HEK293 (cell line): ENCODE measurements at regions of chr6 and their contacts with region 1.

Region 1: GRCh38 chr6:106125925-106126435 is 39.8 kb downstream of the PRDM1 start:
- H3K4me3 ChIP-seq: no peak overlapping the region
- H3K27ac ChIP-seq: no peak overlapping the region
- H3K4me1 ChIP-seq: peaks cover 3% of the 10 kb centered on the region; the same call in 1 of the 2 replicates
- CTCF ChIP-seq: no peak

Region 2: DNA sequence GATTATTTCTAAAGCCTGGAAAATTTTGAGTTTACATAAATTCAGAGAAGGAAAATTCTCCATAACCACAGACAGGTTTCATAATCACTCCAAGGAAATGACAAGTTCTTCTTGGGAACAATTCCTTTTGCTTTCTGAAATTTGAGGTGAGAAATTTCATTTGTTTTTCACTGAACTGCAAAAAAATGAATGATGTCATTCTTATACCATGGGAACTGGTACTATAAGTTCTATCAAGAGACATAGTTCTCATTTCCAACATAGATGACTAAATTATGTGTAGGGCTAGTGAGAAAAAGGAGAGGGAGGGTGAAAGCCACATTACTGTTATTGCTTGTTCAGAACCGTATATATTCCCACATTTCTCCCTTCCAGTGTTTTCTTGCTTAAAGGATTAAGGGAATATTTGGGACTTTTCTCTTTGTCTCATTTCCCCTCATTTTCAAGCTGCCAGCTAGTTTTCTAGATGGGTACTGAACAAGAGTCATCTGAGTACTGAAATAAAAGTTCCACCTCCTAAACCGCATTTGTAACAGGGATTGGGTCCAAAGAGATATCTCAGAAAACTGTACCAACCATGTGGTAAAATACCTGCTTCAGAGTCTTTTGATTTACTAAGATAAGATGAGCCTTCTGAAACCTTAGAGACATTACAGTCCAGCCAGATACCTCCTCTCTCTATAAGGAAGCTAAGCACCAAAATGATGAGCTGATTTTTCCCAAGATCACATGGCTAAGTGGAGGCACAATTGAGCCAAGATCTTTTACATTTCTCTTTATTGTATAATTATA is 184.2 kb before region 1 on chr6:
- CTCF ChIA-PET with region 1: no interaction called
- POLR2A ChIA-PET with region 1: no interaction called
- H3K4me3 ChIP-seq: no peak overlapping the region
- H3K27ac ChIP-seq: no peak overlapping the region
- H3K4me1 ChIP-seq: peaks cover 5% of the 10 kb centered on the region; the same call in 1 of the 2 replicates
- CTCF ChIP-seq: no peak

Region 3: DNA sequence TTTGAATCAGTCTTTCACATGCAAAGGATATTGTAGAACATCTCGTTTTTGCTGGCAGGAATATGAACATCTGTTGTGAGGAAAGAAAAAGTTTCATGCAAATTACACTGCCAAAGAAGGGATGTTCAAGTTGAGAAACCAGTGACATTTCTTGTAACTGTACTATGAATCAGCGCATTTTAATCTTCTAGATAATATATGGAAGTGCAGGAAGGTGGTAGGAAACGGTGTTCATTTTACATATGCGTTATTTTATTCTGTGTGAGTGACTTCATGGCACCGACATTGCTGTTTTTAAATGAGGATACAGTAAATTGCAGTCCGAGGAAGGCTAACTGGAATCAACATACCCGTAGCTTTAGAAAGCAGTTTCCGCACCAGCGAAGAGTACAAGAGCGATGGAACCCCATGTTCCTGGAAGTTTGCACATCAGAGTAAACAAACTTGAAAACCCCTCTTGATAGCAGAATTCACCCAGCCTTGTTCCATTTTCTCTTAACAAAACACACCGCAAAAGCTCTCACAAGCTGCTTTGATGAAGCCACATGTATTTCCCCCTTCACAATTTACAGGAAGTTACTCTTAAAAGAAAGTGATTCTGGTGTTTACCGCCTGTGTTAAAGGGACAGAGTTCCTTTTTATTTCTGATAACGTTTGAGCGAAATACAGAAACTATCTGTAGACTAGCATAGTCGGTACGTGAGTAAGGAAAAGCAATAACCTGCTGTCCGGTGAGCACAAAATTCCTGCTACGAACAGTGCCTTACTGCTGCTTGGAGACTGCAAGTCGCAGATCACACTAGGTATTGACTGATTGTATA is 28.4 kb before region 1 on chr6:
- CTCF ChIA-PET with region 1: interaction called, 3 read pairs
- POLR2A ChIA-PET with region 1: interaction called, 10 read pairs
- H3K4me3 ChIP-seq: no peak overlapping the region
- H3K27ac ChIP-seq: peak overlapping the region; percentile 35
- H3K4me1 ChIP-seq: peaks cover 6% of the 10 kb centered on the region
- CTCF ChIP-seq: no peak